Naive thymus-derived CD8-positive, alpha-beta T cell (primary cell): ENCODE measurements at regions of chr1 and their contacts with region 1.

Region 1: DNA sequence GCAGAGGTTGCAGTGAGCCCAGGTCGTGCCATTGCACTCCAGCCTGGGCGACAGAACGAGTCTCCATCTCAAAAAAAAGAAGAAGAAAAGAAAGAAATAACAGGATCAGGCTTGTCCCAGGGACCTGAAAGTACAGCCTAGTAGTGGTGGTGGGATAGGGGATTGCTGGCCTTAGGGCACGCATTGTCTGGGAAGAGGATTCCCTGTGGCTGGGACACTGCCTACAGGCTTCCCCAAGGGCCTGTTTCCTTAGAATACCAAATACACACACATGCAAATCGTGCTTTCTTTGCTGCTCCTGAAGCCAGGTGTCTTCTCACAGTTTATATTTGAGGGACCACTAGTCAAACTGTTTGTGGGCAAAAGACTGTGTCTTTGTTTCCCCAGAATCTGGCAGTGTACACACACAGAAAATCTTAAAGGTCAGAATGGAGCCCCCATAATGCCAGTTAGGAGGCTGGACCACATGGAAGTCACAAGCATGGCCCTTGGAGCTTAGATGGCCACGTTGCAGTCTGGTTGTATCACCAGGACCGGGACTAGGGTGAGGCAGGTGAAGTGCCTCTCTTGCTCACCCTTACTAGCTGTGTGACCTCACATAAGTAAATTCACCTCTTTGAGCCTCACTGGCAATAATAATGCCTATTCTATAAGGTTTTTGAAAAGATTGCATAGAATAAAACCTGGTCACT is 12.7 kb upstream of the ASAP3 start:
- DNase-seq: no peak
- ATAC-seq: no peak
- H3K4me3 Mint-ChIP-seq: no peak overlapping the region
- H3K27ac Mint-ChIP-seq: no peak overlapping the region
- H3K4me1 Mint-ChIP-seq: peaks cover 0 to 9% (median 0%) of the 10 kb centered on the region in 4 donors
- H3K27me3 Mint-ChIP-seq: peaks cover 0 to 4% (median 2%) of the 10 kb centered on the region in 5 donors

Region 2: GRCh38 chr1:22826604-22827580 is 669.7 kb before region 1 on chr1:
- POLR2A ChIA-PET with region 1: no interaction called
- DNase-seq: no peak
- ATAC-seq: no peak
- H3K4me3 Mint-ChIP-seq: no peak overlapping the region
- H3K27ac Mint-ChIP-seq: no peak overlapping the region
- H3K4me1 Mint-ChIP-seq: no peaks in the 10 kb centered on the region
- H3K27me3 Mint-ChIP-seq: peaks cover 3 to 16% (median 9%) of the 10 kb centered on the region in 5 donors

Region 3: DNA sequence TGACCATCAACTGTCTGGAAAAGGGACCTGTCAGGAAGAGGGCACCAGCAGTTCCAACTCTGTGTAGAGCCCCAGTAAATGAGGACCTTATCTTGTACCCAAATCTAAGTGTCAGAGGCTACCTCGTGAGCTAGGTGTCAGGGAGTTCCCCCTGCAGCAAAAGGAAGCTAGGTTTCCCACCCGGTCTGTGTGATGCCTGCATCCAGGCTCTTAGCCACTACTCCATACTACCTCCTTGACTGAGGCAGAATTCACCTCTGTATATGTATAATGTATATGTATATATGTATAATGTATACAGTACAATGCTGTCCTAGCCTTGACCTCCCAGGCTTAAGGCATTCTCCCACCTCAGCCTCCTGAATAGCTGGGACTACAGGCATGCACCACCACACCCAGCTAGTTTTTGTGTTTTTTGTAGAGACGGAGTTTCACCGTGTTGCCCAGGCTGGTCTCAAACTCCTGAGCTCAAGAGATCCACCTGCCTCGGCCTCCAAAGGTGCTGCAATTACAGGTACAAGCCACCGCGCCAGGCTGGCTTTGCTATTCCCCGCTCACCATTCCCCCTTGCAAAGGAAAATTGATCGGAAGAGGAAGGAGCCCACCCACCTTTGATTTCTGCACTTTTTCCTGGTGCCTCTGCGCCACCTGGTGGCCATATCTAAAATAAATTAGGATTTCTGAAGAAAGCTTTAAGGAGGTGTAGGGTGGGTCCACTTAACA is 312.3 kb before region 1 on chr1:
- POLR2A ChIA-PET with region 1: no interaction called
- DNase-seq: peak; percentile 10 to 73 (median 48)
- ATAC-seq: peak; percentile 39 to 50
- H3K4me3 Mint-ChIP-seq: peak overlapping the region; percentile 60 to 82 (median 72)
- H3K27ac Mint-ChIP-seq: peak overlapping the region in 5 of 10 donors; percentile 14 to 80 (median 43)
- H3K4me1 Mint-ChIP-seq: peaks cover 3 to 10% (median 4%) of the 10 kb centered on the region in 4 donors
- H3K27me3 Mint-ChIP-seq: peaks cover 0 to 10% (median 0%) of the 10 kb centered on the region in 5 donors

Region 4: DNA sequence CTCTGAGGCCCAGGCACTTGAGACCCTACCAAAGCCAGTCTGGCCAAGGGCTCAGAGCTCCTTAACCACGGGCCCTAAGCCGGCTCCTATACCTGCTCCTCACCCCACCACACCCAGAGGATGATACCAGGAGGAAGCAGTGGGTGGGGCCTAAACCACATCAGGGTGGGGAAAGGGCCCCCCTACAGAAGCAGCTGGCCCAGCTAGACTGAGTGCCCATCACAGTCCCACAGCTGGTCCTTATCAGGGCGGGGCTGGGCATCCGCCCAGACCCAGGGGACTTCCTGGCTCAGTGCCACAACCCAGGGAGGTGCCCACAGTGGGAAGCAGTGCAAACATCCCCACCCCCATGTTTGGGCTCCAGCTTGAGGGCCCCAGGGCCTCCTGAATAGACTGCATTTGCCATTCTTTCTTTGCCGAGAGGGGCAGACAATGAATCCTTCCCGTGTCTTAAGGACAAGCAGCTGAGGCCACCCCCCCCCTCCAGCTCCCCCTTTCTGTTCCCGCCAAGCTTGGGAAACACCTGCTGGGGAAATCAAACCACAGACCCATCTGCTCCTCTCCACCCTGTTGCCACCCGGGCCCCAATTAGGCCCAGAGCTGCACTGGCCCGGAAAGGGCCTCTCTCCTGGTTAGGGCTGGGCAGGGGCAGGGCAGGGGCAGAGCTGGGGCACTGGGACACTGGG is 28.2 kb after region 1 on chr1:
- POLR2A ChIA-PET with region 1: interaction called, 19 read pairs
- DNase-seq: peak in 4 of 10 donors; percentile 14 to 36 (median 31)
- ATAC-seq: peak; percentile 51 to 65
- H3K4me3 Mint-ChIP-seq: peak overlapping the region; percentile 24 to 79 (median 68)
- H3K27ac Mint-ChIP-seq: peak overlapping the region in 9 of 10 donors; percentile 27 to 91 (median 79)
- H3K4me1 Mint-ChIP-seq: peaks cover 26 to 74% (median 62%) of the 10 kb centered on the region in 4 donors
- H3K27me3 Mint-ChIP-seq: peaks cover 0 to under 1% (median 0%) of the 10 kb centered on the region in 5 donors

Region 5: GRCh38 chr1:23530747-23531561 is 34.3 kb after region 1 on chr1 and contains the start of gene E2F2:
- POLR2A ChIA-PET with region 1: interaction called, 19 read pairs
- DNase-seq: peak; percentile 69 to 89 (median 76)
- ATAC-seq: peak; percentile 86 to 90
- H3K4me3 Mint-ChIP-seq: peak within 1 kb of the TSS; percentile 80 to 94 (median 91)
- H3K27ac Mint-ChIP-seq: peak within 1 kb of the TSS in 9 of 10 donors; percentile 50 to 81 (median 73)
- H3K4me1 Mint-ChIP-seq: peaks cover 22 to 80% (median 66%) of the 10 kb centered on the region in 4 donors
- H3K27me3 Mint-ChIP-seq: peaks cover 0 to 4% (median 0%) of the 10 kb centered on the region in 5 donors
- polyA plus RNA-seq, gene E2F2: 0.05 to 0.14 TPM in 2 of 3 donors, not detected in the other

Region 6: DNA sequence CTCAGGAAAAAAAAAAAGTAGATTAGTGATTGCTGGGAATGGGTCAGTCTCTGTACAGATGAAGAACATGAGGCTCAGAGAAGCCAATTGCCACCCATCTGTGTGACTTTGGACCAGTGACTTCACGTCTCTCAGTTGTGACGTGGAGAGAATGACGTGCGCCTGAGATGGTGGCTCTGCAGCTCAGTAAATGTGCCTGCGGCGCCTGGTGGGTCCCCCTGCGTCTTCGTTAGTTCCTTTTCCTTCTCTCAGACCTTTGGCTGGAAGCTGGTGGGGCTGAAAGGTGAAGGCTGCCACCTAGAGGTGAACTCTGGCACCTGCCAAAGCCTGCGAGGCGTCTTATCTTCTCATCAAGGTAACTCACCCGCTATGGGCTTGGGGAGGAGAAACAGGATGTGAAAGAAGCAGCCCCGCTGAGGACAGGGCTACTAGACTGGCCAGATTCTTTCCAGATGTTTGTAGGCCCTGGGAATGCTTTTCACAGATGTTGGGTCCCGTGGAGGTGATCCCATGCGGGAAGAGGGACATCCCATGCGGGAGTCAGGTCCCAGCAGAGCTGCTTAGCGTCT is 43.1 kb after region 1 on chr1:
- POLR2A ChIA-PET with region 1: interaction called, 32 read pairs
- DNase-seq: peak; percentile 73 to 94 (median 92)
- ATAC-seq: peak; percentile 95 to 96
- H3K4me3 Mint-ChIP-seq: peak overlapping the region; percentile 28 to 74 (median 49)
- H3K27ac Mint-ChIP-seq: peak overlapping the region in 9 of 10 donors; percentile 12 to 87 (median 74)
- H3K4me1 Mint-ChIP-seq: peaks cover 9 to 23% (median 14%) of the 10 kb centered on the region in 4 donors
- H3K27me3 Mint-ChIP-seq: no peaks in the 10 kb centered on the region

Region 7: GRCh38 chr1:23634842-23635651 is 138.4 kb after region 1 on chr1:
- POLR2A ChIA-PET with region 1: no interaction called
- DNase-seq: peak in 9 of 10 donors; percentile 52 to 77 (median 67)
- ATAC-seq: peak; percentile 83 to 84
- H3K4me3 Mint-ChIP-seq: peak overlapping the region; percentile 52 to 80 (median 74)
- H3K27ac Mint-ChIP-seq: peak overlapping the region; percentile 89 to 98 (median 93)
- H3K4me1 Mint-ChIP-seq: peaks cover 20 to 51% (median 41%) of the 10 kb centered on the region in 4 donors
- H3K27me3 Mint-ChIP-seq: no peaks in the 10 kb centered on the region